ENCODE measurements at regions of chr3 and their contacts with region 1.

Region 1: DNA sequence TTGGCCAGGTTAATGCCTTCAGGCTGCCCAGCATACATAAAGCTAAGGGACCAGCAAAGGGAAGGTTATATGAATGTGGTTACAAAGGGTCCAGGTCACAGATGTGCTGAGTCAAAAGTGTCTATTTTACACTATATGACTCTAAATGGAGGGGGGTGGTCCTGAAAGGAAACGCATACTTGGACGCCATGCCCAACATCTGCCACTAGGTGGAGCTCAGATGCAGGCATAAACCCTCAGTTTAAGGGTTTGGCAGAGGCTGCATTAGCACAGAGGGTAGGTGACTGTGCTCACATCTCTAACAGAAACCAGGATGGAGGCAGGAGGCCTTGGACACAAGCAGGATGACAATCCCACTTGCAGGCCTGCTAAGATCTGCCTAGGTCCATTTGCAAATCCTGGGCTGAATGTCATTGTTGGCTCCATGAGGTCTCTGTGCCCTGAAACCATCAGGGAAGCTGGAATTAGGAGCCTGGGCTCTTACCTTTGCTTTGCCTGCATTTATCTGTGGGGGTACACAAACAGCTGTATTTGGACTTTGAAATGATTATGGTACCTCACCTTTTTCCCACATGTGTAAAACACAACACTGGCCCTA is 55.8 kb downstream of the ZNF621 start:
- DNase-seq: peak; percentile 38
- ATAC-seq: peak; percentile 81
- H3K4me3 ChIP-seq: no peak overlapping the region
- H3K27ac ChIP-seq: no peak overlapping the region
- H3K4me1 ChIP-seq: no peaks in the 10 kb centered on the region
- H3K27me3 ChIP-seq: no peaks in the 10 kb centered on the region
- CTCF ChIP-seq: peak; percentile 57 to 99 (median 93); a peak in 5 of 6 replicates
- POLR2A ChIP-seq: no peak
- RAD21 ChIP-seq: peak; percentile 92

Region 2: GRCh38 chr3:40248591-40248990 is 332.0 kb before region 1 on chr3:
- CTCF ChIA-PET with region 1: no interaction called
- POLR2A ChIA-PET with region 1: no interaction called
- RAD21 ChIA-PET with region 1: no interaction called
- intact Hi-C with region 1: no loop called
- DNase-seq: no peak
- ATAC-seq: no peak
- H3K4me3 ChIP-seq: no peak overlapping the region
- H3K27ac ChIP-seq: no peak overlapping the region
- H3K4me1 ChIP-seq: no peaks in the 10 kb centered on the region
- H3K27me3 ChIP-seq: 0 out of 2 replicates have a peak, but pooled peaks cover 5% of the 10 kb centered on the region
- CTCF ChIP-seq: no peak
- POLR2A ChIP-seq: no peak
- RAD21 ChIP-seq: no peak

Region 3: GRCh38 chr3:40476478-40477470 is 103.8 kb before region 1 on chr3 and contains the start of gene ZNF619:
- CTCF ChIA-PET with region 1: no interaction called
- POLR2A ChIA-PET with region 1: no interaction called
- RAD21 ChIA-PET with region 1: no interaction called
- intact Hi-C with region 1: no loop called
- DNase-seq: peak; percentile 42
- ATAC-seq: peak; percentile 84
- H3K4me3 ChIP-seq: peak within 1 kb of the TSS; percentile 79 to 85
- H3K27ac ChIP-seq: peak within 1 kb of the TSS; percentile 57
- H3K4me1 ChIP-seq: peaks cover 7 to 12% of the 10 kb centered on the region in 2 experiments; a peak in 3 of 4 replicates
- H3K27me3 ChIP-seq: no peaks in the 10 kb centered on the region
- CTCF ChIP-seq: no peak
- POLR2A ChIP-seq: peak; percentile 55
- RAD21 ChIP-seq: no peak
- total RNA-seq, gene ZNF619: 7.3 TPM

Region 4: DNA sequence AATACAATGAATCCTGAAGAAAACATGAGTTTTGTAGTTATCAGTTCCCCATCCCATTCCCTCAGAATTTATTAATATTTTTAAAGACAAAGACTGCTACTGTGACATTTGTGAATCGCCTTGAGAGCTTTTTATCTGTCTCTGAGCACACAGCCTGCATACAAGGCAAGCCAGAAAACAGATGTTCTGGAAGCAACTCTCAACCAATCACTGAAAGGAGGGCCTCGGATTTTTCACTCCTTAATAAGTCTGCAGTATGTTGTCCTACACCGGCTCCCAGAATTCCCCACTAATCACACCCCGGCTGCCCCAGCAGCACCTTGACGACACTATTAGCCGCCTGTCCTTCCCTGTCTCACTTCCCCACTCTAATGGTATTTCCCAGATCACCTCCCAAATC is 82.7 kb after region 1 on chr3:
- CTCF ChIA-PET with region 1: no interaction called
- POLR2A ChIA-PET with region 1: no interaction called
- RAD21 ChIA-PET with region 1: no interaction called
- intact Hi-C with region 1: no loop called
- DNase-seq: no peak
- ATAC-seq: no peak
- H3K4me3 ChIP-seq: no peak overlapping the region
- H3K27ac ChIP-seq: no peak overlapping the region
- H3K4me1 ChIP-seq: no peaks in the 10 kb centered on the region
- H3K27me3 ChIP-seq: peaks cover 15% of the 10 kb centered on the region; the same call in 1 of the 2 replicates
- CTCF ChIP-seq: no peak
- POLR2A ChIP-seq: no peak
- RAD21 ChIP-seq: no peak

Region 5: DNA sequence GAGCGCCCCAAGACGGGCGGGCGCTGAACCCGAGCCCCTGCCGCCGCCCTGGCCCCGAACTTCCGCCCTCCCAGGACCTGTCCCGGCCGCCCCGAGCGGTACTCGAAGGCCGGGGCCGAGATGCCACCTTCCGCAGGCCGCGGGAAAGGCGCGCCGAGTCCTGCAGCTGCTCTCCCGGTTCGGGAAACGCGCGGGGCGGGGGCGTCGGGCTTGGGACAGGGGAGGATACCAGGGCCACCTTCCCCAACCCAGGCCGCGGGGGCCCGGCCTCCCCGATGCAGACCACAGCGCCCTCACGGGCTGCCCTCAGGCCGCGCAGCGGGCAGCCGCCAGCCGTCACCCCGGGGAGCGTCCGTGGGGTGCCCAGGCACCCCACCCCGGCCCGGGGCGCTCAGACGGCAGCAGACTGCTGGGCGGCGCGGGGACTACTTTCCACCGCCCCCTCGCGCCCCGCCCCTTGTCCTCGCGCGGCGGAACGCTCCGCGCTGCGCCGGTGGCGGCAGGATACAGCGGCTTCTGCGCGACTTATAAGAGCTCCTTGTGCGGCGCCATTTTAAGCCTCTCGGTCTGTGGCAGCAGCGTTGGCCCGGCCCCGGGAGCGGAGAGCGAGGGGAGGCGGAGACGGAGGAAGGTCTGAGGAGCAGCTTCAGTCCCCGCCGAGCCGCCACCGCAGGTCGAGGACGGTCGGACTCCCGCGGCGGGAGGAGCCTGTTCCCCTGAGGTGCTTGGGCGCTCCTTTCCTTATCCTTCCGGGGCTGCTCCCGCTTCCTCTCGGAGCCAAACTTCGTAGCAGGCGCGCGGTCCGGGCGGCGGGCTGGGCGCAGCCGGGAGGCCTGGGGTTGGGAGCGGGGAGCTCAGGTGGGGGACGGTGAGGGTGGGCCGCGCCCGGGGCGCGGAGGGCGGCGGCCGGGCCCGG is 618.6 kb after region 1 on chr3 and contains the start of gene CTNNB1:
- CTCF ChIA-PET with region 1: no interaction called
- POLR2A ChIA-PET with region 1: interaction called, 3 read pairs
- RAD21 ChIA-PET with region 1: no interaction called
- intact Hi-C with region 1: loop called (anchors 5 kb)
- DNase-seq: peak; percentile 83
- ATAC-seq: peak; percentile 82
- H3K4me3 ChIP-seq: peak within 1 kb of the TSS; percentile 85 to 91
- H3K27ac ChIP-seq: peak within 1 kb of the TSS; percentile 90
- H3K4me1 ChIP-seq: peaks cover 20 to 32% of the 10 kb centered on the region in 2 experiments
- H3K27me3 ChIP-seq: peaks cover 8% of the 10 kb centered on the region; the same call in 1 of the 2 replicates
- CTCF ChIP-seq: no peak
- POLR2A ChIP-seq: peak; percentile 91
- RAD21 ChIP-seq: peak; percentile 16
- total RNA-seq, gene CTNNB1: 265 TPM

Region 6: GRCh38 chr3:41716471-41716870 is 1135.9 kb after region 1 on chr3:
- CTCF ChIA-PET with region 1: interaction called, 8 read pairs
- POLR2A ChIA-PET with region 1: no interaction called
- RAD21 ChIA-PET with region 1: no interaction called
- intact Hi-C with region 1: loop called (anchors 10 kb)
- DNase-seq: no peak
- ATAC-seq: no peak
- H3K4me3 ChIP-seq: no peak overlapping the region
- H3K27ac ChIP-seq: no peak overlapping the region
- H3K4me1 ChIP-seq: no peaks in the 10 kb centered on the region
- H3K27me3 ChIP-seq: no peaks in the 10 kb centered on the region
- CTCF ChIP-seq: peak in 2 of 3 experiments; percentile 11 to 26; a peak in 2 of 6 replicates
- POLR2A ChIP-seq: no peak
- RAD21 ChIP-seq: peak; percentile 49

Region 7: DNA sequence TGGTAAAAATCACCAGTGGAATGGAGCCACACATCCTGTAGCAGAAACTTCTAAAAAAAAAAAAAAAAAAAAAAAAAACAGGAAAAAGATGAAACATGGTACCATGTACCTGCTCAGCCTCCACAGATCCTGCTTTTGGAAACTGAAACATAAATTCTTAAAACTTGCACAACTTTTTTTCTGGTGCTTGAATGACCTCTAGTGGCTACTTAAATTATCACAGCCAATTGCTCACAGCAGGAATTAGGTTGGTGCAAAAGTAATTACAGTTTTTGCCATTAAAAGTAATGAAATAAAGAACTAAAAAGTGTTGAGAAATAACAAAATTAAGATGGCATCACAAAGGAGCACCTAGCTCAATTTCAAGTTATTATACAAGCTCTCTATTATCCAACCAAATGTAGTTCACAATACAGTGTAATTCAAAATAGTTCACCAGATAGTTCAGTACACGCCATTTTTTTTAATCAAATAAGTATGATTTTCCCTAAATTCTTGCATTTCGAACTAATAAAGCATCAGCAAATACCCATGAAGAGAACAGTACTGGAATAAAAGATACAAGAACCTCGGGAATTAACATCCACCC is 1300.7 kb after region 1 on chr3:
- CTCF ChIA-PET with region 1: interaction called, 3 read pairs
- POLR2A ChIA-PET with region 1: no interaction called
- RAD21 ChIA-PET with region 1: no interaction called
- intact Hi-C with region 1: loop called (anchors 1 kb)
- DNase-seq: no peak
- ATAC-seq: no peak
- H3K4me3 ChIP-seq: no peak overlapping the region
- H3K27ac ChIP-seq: no peak overlapping the region
- H3K4me1 ChIP-seq: no peaks in the 10 kb centered on the region
- H3K27me3 ChIP-seq: no peaks in the 10 kb centered on the region
- CTCF ChIP-seq: peak; percentile 51 to 77 (median 69); a peak in 5 of 6 replicates
- POLR2A ChIP-seq: no peak
- RAD21 ChIP-seq: peak; percentile 85